MCF 10A (cell line): ENCODE measurements at regions of chr16 and their contacts with region 1.

Region 1: DNA sequence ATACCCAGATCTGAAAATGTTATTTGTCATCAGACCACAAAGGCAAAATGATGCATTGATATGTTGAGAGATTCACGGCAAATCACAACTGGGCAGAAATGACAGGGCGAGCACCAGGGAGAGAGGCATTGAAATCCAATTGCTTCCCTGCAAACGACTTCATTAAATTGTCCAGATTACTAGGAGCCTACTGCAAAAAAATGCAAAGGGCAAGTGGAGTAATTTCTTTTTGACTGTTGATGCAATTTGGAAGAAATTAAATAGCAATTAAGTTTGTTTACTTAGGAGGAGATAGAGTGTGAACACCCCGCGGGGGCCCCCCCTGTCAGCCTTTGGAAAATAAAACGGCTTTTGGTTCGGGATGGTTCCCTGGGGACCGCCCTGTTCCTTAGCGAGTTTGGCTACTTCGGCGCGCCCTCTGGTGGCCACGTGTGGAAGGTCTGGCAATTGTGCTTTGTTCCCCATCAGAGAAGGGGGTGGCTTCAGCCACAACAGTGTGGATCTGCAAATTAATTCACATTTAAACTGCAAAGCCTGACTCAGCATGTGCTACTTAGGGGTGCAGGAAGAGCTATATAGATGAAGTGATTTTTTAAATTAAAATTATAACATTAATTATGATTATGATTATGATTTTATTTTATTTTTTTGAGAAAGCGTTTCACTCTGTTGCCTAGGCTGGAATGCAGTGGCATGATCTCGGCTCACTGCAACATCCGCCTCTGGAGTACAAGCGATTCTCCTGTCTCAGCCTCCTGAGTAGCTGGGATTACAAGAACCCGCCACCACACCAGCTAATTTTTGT is 14.5 kb upstream of the TMC7 start:
- DNase-seq: peak; percentile 81
- H3K4me3 Mint-ChIP-seq: no peak overlapping the region
- H3K27ac Mint-ChIP-seq: no peak overlapping the region
- H3K4me1 Mint-ChIP-seq: peaks cover 6% of the 10 kb centered on the region
- H3K27me3 Mint-ChIP-seq: no peaks in the 10 kb centered on the region
- CTCF ChIP-seq: peak; percentile 82

Region 2: DNA sequence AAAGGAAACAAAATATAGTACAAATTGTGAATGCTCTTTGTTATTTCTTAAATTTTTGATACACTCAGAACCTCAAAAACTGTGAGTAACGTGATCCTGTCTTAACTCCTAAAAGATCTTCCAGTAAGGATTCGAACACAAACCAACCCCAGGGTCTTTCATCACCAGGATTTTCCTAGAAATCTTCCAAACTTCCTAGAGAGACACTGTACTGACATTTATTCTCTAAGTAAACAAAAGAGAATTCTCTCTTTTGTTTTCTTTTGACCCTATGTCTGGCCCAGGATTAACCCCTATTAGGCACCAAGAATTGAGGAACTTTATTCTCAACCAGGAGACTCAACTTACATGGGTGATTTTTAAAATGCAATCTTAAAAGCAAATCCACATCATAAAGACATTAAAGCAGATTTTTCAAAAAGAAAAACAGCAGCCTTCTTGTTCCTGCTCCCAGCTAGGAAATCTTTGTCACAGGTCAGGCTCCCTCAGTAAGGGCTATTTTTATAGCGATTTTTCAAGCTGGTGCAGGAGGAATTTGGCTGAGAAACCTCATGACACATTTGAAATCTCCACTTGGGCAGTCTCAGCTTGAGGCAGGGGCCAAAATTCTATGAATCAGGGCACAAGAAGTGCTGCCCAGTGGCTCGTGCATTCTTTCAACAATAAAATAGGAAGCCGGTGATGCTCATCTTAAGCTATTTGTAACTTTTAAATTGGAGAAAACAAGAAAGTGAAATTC is 36.8 kb before region 1 on chr16:
- CTCF ChIA-PET with region 1: interaction called, 33 read pairs
- POLR2A ChIA-PET with region 1: no interaction called
- intact Hi-C with region 1: loop called (anchors 2 kb)
- DNase-seq: peak; percentile 39
- H3K4me3 Mint-ChIP-seq: no peak overlapping the region
- H3K27ac Mint-ChIP-seq: peak overlapping the region; percentile 49
- H3K4me1 Mint-ChIP-seq: peaks cover 10% of the 10 kb centered on the region
- H3K27me3 Mint-ChIP-seq: no peaks in the 10 kb centered on the region
- CTCF ChIP-seq: no peak

Region 3: DNA sequence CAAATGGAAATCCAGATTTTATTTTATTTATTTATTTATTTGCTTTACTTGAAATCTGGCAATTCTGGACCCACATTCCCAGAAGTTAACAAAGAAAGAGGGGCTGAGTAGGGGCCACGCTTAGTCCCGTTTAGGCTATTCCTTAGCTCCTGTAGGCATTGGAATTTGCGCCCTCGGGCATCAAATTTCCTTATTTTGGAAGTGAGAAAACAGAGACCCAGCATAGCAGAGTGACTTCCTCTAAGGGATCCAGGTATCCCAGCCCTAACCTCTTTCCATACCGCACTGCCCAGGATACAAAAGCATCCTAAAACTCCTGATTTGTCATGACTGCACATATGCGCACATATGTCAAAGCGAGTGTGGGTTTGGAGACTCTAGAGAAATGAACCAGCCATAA is 24.0 kb before region 1 on chr16:
- CTCF ChIA-PET with region 1: interaction called, 10 read pairs
- POLR2A ChIA-PET with region 1: interaction called, 6 read pairs
- intact Hi-C with region 1: no loop called
- DNase-seq: no peak
- H3K4me3 Mint-ChIP-seq: no peak overlapping the region
- H3K27ac Mint-ChIP-seq: no peak overlapping the region
- H3K4me1 Mint-ChIP-seq: no peaks in the 10 kb centered on the region
- H3K27me3 Mint-ChIP-seq: no peaks in the 10 kb centered on the region
- CTCF ChIP-seq: no peak

Region 4: GRCh38 chr16:19094541-19095365 is 125.5 kb after region 1 on chr16:
- CTCF ChIA-PET with region 1: no interaction called
- POLR2A ChIA-PET with region 1: no interaction called
- intact Hi-C with region 1: no loop called
- DNase-seq: peak; percentile 67
- H3K4me3 Mint-ChIP-seq: no peak overlapping the region
- H3K27ac Mint-ChIP-seq: no peak overlapping the region
- H3K4me1 Mint-ChIP-seq: peaks cover 23% of the 10 kb centered on the region
- H3K27me3 Mint-ChIP-seq: no peaks in the 10 kb centered on the region
- CTCF ChIP-seq: no peak

Region 5: DNA sequence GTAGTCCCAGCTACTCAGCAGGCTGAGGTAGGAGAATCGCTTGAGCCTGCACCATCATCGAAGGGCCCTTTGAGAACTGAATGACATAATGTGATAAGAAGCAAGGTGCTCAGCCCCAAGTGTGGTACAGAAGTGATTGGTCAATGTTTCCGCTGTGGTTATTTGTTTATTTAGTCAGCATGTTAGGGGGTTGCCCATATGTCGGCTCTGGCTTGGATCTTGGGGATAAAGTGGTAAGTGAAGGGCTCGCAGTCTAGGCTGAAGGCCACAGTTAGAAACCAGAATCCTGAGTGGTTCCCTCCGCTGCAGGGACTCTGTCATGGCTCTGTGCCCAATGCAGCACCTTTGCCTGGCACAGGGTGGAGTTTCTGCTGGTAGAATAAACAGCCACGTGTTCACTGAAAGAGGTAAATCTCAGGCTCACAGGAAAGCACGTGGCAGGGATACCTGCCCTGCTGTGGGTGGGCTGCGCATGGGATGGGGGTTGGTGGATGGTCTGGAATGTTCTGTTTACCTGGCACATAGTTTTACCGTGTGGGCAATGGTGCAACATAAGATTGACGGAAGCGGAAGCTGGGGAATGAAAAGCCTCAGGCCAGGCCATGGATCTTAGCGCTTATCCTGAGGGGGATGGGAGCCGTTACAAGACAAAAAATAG is 234.3 kb after region 1 on chr16:
- CTCF ChIA-PET with region 1: no interaction called
- POLR2A ChIA-PET with region 1: no interaction called
- intact Hi-C with region 1: no loop called
- DNase-seq: no peak
- H3K4me3 Mint-ChIP-seq: no peak overlapping the region
- H3K27ac Mint-ChIP-seq: no peak overlapping the region
- H3K4me1 Mint-ChIP-seq: no peaks in the 10 kb centered on the region
- H3K27me3 Mint-ChIP-seq: no peaks in the 10 kb centered on the region
- CTCF ChIP-seq: no peak

Region 6: GRCh38 chr16:19213890-19214289 is 244.6 kb after region 1 on chr16:
- CTCF ChIA-PET with region 1: no interaction called
- POLR2A ChIA-PET with region 1: no interaction called
- intact Hi-C with region 1: no loop called
- DNase-seq: no peak
- H3K4me3 Mint-ChIP-seq: no peak overlapping the region
- H3K27ac Mint-ChIP-seq: no peak overlapping the region
- H3K4me1 Mint-ChIP-seq: peaks cover 6% of the 10 kb centered on the region
- H3K27me3 Mint-ChIP-seq: peaks cover 15% of the 10 kb centered on the region
- CTCF ChIP-seq: no peak